ENCODE measurements at regions of chr6 and their contacts with region 1.

Region 1: DNA sequence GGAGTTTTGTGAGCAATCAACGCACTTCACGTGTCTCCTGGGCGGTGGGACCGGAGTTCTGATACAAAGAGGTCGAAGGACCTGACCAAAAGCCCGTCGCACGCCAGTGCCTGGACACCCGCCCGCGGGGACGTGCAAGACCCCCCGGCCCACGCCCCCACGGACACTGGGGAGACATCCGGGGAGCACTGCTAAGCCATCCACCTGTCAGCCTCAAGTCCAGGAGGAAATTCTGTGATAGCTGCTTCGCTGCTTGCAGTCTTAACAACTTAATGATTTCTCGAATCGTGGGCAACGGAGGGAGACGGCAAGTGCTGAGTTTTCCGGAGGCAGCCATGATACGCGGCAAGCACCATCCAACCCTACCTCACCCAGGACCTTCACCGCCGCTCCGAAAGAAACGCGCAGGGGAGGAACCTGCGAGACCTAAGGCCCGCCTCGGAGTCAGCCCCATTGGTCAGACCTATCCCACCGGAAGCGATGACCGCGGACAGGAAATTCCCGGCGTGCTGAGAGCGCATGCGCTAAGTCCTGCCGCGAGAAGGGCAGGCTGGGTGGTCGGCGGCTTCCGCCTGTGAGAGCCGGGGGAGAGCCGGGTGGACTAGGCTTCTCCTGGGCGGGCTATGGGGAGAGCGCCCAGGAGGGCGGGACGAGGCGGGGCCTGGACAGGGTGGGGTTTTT is at the start of gene TFB1M:
- DNase-seq: peak; percentile 95
- CTCF ChIP-seq: no peak

Region 2: GRCh38 chr6:155273431-155273830 is 40.8 kb before region 1 on chr6:
- CTCF ChIA-PET with region 1: no interaction called
- POLR2A ChIA-PET with region 1: no interaction called
- DNase-seq: no peak
- CTCF ChIP-seq: no peak

Region 3: GRCh38 chr6:155301867-155302266 is 12.4 kb before region 1 on chr6:
- CTCF ChIA-PET with region 1: interaction called, 15 read pairs
- POLR2A ChIA-PET with region 1: no interaction called
- DNase-seq: no peak
- CTCF ChIP-seq: no peak

Region 4: GRCh38 chr6:155327326-155328073 is 13.3 kb after region 1 on chr6:
- CTCF ChIA-PET with region 1: interaction called, 20 read pairs
- POLR2A ChIA-PET with region 1: interaction called, 5 read pairs
- DNase-seq: peak; percentile 32
- CTCF ChIP-seq: peak; percentile 60

Region 5: DNA sequence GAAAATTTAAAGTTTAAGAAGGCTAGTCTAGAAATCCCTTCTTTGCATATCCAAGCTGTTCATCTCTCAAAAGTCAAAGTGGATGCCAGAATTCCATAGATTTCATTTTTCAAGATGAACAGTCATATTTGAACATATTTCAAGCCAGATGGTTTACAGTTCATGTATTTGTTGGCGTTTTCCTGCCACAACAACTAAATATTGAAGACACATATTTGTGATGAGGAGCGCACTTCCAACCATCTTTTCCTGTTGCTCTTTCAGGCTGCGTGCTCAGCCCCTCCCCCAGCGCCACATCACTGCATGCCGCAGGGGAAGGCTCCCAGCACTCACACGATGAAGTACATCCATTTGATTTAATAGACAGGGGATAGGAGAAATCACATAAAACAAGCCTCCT is 147.3 kb after region 1 on chr6:
- CTCF ChIA-PET with region 1: no interaction called
- POLR2A ChIA-PET with region 1: no interaction called
- DNase-seq: no peak
- CTCF ChIP-seq: no peak